ENCODE measurements at regions of chr18 and their contacts with region 1.

Region 1: GRCh38 chr18:50866765-50867164 is 12.2 kb upstream of the ME2 start:
- H3K4me3 ChIP-seq: no peak overlapping the region
- H3K27ac ChIP-seq: no peak overlapping the region
- H3K4me1 ChIP-seq: peaks cover 7% of the 10 kb centered on the region
- CTCF ChIP-seq: no peak

Region 2: GRCh38 chr18:50836521-50836957 is 30.2 kb before region 1 on chr18:
- CTCF ChIA-PET with region 1: interaction called, 7 read pairs
- POLR2A ChIA-PET with region 1: interaction called, 11 read pairs
- H3K4me3 ChIP-seq: no peak overlapping the region
- H3K27ac ChIP-seq: no peak overlapping the region
- H3K4me1 ChIP-seq: no peaks in the 10 kb centered on the region
- CTCF ChIP-seq: no peak

Region 3: DNA sequence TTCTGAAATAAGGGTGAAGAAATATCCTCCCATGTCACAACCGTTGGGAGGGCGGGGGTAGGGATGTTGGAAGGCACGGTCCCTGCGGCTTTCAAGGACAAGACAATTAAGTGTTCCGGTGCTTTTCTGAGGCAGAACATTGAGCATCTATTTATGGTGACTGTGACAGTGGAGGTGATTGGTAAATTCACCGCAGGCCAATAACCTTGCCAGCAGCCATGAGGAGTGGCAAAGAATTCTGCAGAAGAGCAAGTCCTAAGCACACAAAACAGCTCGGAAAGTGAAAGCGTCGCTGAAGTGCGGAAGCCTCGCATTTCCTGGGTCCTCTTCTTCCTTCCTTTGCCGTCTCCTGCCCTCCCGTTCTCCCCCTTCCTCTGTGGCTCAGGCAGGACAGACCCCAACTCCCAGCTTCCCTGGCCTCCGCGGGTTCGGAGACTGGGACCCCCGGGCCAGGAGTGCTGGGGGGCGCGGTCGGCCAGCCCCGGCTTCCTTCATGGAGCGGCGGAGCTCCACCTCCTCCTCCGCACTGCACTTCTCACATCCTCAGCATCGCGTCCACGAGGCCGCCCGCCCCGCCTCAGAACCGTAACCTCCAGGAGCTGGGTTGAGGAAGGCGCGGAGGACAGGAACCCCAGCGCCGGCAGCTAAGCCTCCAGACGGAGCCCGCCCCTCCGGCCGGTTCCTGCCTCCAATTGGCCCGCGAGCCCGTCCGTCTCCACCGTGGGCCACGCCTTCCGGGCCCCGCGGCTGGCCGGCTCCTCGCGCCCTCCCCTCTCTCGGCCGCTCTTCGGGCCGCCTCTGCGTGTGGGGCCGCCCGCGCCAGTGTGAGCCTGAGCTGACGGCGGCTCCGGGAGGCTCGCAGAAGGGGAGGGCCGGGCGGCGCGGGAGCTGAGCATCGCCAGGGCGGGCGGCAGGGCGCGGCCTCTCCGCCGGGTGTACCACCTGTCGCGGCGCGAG is 11.9 kb after region 1 on chr18 and contains the start of gene ME2:
- CTCF ChIA-PET with region 1: interaction called, 5 read pairs
- POLR2A ChIA-PET with region 1: interaction called, 47 read pairs
- H3K4me3 ChIP-seq: peak within 1 kb of the TSS; percentile 58
- H3K27ac ChIP-seq: peak within 1 kb of the TSS; percentile 96
- H3K4me1 ChIP-seq: peaks cover 15% of the 10 kb centered on the region
- CTCF ChIP-seq: no peak; the same call in 1 of the 2 replicates